Posterior vena cava (tissue), 2 donors: ENCODE measurements at regions of chr9 and their contacts with region 1.

Region 1: DNA sequence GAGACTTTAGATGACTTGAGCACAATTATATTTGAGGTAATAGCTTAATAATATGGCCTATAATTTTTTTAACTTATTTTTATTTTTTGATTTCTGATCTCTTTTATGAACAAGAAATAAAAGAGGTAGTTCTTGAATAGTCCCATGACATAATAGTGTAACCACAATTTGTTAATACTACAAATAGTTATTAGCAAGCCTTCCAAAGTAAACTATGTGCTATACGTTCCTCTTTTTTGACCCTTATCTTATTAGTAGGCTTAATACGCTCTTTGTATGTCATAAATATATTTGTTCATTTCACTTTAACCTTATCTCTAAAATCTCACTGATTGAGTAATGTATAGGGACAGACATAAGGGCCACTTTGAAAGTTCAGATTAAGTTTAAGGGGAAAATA is 78.7 kb upstream of the NR4A3 start:
- DNase-seq: no peak

Region 2: DNA sequence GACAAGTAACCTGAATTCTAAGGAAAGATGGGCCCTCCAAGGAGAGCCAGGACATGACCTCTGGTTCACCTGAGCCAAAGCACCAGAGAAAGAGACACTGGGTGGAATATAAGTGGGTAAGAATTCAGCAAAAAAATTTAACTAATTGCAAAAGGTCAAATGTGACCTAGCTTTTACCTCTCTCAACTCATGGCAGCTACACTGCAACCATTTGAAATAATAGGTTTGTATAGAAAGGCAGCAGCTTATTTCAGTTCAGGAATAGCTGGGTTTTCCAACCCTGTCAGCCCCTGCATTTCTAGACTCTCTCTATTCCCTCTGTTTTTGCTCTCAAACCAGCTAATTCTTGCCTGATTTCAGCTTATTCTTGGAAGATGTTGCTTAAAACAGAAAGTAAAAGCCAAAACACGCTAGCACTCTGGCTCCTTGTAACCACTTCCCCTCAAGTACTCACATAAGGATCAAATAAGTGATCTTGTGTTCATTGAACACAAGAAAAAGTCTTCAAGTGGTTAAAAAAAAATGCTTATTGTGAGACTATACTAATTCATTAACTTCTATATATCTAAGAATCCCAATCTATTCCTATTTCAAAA is 22.5 kb before region 1 on chr9:
- intact Hi-C with region 1: loop called in 1 of 2 experiments (anchors 2 kb)
- DNase-seq: no peak

Region 3: GRCh38 chr9:101650142-101650541 is 1907.1 kb after region 1 on chr9:
- intact Hi-C with region 1: no loop called
- DNase-seq: no peak